Activated T-helper 2 cell treated with anti-CD3 and anti-CD28 coated beads, Interferon-gamma antibody, Interleukin-2, Interleukin-4, amounts not matched to agents 10 μg/mL and 5 μg/mL and 100 μg/mL, durations not matched to agents 14 hours and 24 hours and 36 hours (primary cell): ENCODE measurements at regions of chr20 and their contacts with region 1.

Region 1: GRCh38 chr20:49186535-49187329 is 1.4 kb downstream of the STAU1 start:
- DNase-seq: peak; percentile 61
- H3K4me3 Mint-ChIP-seq: peak overlapping the region; percentile 87
- H3K27ac Mint-ChIP-seq: peak overlapping the region; percentile 62
- H3K4me1 Mint-ChIP-seq: peaks cover 42% of the 10 kb centered on the region
- H3K27me3 Mint-ChIP-seq: peaks cover 2% of the 10 kb centered on the region

Region 2: DNA sequence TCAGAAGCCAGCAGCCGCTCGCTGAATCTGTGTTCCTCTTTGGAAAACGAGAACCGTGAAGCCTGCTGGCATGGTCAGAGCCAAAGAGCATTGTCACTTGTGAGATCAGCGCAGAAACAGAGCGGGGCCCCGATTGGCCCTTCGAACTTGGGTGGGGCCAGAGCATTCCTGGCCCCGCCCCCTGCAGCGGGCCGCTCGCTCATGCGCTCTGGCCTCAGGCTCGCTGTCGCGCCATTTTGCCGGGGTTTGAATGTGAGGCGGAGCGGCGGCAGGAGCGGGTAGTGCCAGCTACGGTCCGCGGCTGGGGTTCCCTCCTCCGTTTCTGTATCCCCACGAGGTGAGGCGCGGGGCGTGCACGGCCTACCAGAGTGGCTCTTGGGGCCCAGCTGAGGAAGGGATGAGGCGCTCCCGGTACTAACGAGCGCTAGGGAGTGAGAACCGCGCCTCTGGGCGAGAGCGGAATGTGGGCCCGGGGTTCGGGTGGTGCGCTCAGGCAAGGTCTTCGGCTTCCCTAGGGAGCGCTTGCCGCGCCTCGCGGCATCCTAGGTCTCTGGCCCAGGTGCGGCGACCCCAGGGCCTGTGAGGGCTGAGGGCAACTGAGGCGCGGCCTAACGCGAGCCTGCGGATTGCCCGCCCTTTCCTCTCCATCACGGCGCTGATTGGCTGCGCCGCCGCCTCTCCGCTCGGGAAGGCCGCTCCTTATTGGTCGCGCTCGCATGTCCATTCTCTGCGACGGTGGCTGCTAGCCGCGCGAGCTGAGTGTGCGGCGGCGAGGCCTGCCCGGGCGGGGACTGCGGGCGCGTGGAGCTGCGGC is 140.4 kb before region 1 on chr20 and contains the start of gene CSE1L:
- intact Hi-C with region 1: loop called (anchors 1 kb)
- DNase-seq: peak; percentile 94
- H3K4me3 Mint-ChIP-seq: peak within 1 kb of the TSS; percentile 98
- H3K27ac Mint-ChIP-seq: peak within 1 kb of the TSS; percentile 100
- H3K4me1 Mint-ChIP-seq: peaks cover 27% of the 10 kb centered on the region
- H3K27me3 Mint-ChIP-seq: no peaks in the 10 kb centered on the region
- total RNA-seq, gene CSE1L: 114 TPM in 2 replicates

Region 3: DNA sequence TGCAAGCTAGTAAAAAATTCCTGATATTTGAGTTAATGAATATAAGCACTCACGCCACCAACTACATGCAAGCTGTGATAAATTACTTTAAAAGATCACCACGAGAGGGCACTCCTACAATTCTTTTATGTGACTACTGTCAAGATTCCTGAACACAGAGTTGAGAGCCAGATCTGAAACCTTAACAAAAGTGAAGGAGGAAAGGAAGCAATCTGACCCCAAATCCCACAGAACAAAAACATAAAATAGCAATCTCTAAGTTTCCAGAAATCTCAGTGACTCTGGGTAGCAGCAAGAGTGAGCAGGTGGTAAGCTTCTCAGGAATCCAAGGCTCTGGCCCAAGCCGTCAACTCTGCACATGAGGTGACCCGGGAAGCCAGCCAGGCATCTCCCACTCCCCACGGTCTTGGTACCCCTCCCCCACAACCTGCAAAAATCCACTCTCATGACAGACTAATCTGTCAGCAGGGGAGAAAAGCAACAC is 53.7 kb before region 1 on chr20:
- intact Hi-C with region 1: loop called (anchors 5 kb)
- DNase-seq: no peak
- H3K4me3 Mint-ChIP-seq: no peak overlapping the region
- H3K27ac Mint-ChIP-seq: no peak overlapping the region
- H3K4me1 Mint-ChIP-seq: peaks cover 4% of the 10 kb centered on the region
- H3K27me3 Mint-ChIP-seq: no peaks in the 10 kb centered on the region

Region 4: GRCh38 chr20:49166534-49167449 is 19.9 kb before region 1 on chr20:
- intact Hi-C with region 1: loop called (anchors 1 kb)
- DNase-seq: no peak
- H3K4me3 Mint-ChIP-seq: peak overlapping the region; percentile 56
- H3K27ac Mint-ChIP-seq: peak overlapping the region; percentile 82
- H3K4me1 Mint-ChIP-seq: peaks cover 48% of the 10 kb centered on the region
- H3K27me3 Mint-ChIP-seq: no peaks in the 10 kb centered on the region

Region 5: DNA sequence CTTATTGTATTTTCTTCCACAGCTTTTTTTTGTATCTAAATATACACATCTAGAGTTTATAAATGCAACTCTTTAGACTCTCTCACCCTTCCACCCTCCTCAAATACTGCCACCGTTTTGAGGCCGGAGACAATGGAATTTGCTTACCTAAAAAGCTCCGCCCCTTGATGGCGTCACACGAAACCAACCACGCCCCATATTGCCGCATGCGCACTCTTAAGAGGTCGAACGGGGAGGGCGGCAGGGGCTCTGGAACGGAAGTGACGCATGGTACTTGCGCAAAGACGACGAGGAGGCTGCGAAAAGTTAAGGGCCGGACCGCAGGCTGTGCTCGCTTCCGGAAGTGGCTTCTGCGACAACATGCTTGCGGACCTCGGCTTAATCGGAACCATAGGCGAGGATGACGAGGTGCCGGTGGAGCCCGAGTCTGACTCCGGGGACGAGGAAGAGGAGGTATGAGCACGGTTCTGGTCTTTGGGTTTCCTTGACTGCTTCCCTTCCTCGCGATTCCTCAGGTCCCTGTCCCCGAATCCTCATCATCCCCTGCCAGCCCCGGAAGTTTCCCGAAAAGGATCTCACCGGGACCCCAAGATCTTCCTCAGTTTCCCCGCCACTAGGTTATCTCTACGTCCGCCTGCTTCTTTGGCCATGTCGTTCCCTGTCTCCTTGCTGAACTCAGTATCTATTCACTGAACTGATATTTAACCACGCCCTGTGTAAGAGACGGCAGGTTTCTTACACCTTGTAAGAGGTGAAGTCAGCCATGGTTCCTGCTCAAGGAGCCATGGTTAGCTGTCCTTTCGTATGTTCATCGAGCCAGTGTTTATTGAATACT is 32.6 kb after region 1 on chr20 and contains the start of gene DDX27:
- intact Hi-C with region 1: loop called (anchors 1 kb)
- DNase-seq: peak; percentile 96
- H3K4me3 Mint-ChIP-seq: peak within 1 kb of the TSS; percentile 99
- H3K27ac Mint-ChIP-seq: peak within 1 kb of the TSS; percentile 98
- H3K4me1 Mint-ChIP-seq: peaks cover 17% of the 10 kb centered on the region
- H3K27me3 Mint-ChIP-seq: no peaks in the 10 kb centered on the region
- total RNA-seq, gene DDX27: 51.4 and 54.0 TPM in 2 replicates

Region 6: DNA sequence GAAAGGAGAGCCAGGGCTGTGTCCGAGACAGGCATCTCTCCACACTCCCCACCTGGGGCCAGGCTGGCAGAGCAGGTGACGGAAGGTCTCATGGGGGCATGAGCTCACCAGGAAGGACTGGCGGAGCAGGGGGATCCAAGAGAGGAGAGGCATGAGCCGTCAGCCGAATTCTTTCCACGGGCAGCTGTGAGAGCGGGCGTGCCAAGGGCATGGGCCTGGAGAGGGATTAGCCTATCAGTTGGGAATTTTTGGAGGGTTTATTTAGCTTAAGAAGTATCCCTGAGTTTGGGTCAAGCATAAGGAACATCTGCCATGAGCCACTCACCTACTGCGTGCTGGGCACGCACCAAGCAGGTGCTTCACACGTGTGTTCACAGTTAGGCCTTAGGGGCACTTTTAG is 151.3 kb after region 1 on chr20:
- intact Hi-C with region 1: no loop called
- DNase-seq: no peak
- H3K4me3 Mint-ChIP-seq: no peak overlapping the region
- H3K27ac Mint-ChIP-seq: no peak overlapping the region
- H3K4me1 Mint-ChIP-seq: peaks cover 3% of the 10 kb centered on the region
- H3K27me3 Mint-ChIP-seq: peaks cover 11% of the 10 kb centered on the region